Right cardiac atrium (tissue), 5 donors: ENCODE measurements at regions of chr1 and their contacts with region 1.

Region 1: DNA sequence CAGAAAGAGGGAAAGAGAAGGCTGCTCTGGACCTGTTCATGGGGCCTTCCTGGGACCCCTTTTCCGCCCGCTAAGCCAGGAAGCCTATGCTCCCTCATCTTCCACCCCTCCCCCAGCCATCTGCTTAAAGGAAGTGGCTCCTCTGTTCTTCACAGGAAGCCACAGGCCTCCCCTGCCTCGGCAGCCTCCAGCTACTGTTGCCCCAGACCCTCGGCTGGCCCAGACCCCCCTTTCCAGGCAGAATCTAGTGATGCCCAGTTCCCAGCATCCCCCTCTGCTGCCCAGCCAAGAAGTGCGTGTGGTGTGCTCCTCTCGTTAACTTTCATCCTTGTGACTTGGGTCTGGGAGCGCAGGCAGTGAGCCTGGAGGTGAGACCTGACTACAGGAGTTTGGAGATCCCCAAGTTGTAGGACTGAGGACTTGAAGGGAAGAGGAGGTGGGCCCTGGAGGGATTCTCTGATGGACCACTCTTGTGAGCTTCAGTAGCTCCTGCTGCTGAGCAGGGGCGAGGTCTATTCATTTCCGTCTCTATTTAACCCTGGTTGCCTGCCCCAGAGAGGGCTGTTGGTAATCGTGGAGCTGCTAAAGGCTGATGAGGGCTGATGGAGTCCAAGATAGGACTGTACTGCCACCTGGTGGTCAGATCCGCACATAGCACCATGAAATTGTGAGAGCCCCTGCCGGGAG is 9.1 kb downstream of the IFI6 start:
- DNase-seq: peak; percentile 75 to 92 (median 86)
- ATAC-seq: peak; percentile 58 to 72
- H3K4me3 ChIP-seq: no peak overlapping the region
- H3K27ac ChIP-seq: peak overlapping the region; percentile 87
- H3K4me1 ChIP-seq: peaks cover 6% of the 10 kb centered on the region
- H3K27me3 ChIP-seq: no peaks in the 10 kb centered on the region

Region 2: DNA sequence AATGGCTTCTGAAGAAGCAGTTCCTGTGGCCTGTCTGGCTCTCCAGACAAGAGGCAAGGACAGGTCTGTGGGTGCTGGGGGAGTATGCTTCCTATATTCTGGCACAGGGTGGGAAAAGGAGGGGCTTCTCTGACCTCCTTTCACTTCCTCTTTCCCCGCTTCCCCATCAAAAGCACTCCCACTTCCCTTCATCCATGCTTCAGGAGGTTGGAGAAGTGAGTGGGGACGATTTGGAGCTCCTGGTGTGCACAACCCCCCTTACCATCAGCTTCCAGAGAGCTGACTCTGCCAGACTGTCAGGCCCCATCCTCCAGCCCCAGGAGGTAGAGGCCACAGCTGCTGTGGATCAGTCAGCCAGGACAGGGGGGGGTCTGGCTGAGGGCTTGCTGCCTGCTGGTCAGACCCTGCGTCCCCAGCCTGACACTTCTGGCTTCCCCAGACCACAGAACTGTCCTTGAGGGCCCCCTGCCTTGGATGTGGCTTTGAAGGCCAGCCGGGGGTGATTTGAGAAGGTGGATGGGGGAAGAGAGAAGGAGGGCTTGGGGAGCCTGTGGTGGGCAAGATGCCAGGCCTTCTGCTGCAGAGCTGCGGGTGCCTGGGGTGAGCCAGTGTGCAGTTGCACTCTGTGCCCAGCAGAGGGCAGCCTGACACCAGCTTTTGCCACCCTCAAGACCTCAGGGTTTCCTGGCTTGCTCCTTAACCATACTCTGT is 362.4 kb before region 1 on chr1:
- intact Hi-C with region 1: loop called in 2 of 4 experiments (anchors 5 to 10 kb)
- DNase-seq: peak; percentile 82 to 94 (median 93)
- ATAC-seq: peak; percentile 86
- H3K4me3 ChIP-seq: no peak overlapping the region
- H3K27ac ChIP-seq: peak overlapping the region; percentile 78
- H3K4me1 ChIP-seq: peaks cover 13% of the 10 kb centered on the region
- H3K27me3 ChIP-seq: no peaks in the 10 kb centered on the region

Region 3: GRCh38 chr1:27392096-27392777 is 270.6 kb before region 1 on chr1 and contains the start of gene GPR3:
- intact Hi-C with region 1: loop called in 1 of 4 experiments (anchors 10 kb)
- DNase-seq: peak; percentile 95 to 98 (median 97)
- ATAC-seq: peak; percentile 91
- H3K4me3 ChIP-seq: peak within 1 kb of the TSS; percentile 39
- H3K27ac ChIP-seq: peak within 1 kb of the TSS; percentile 77
- H3K4me1 ChIP-seq: peaks cover 9% of the 10 kb centered on the region
- H3K27me3 ChIP-seq: no peaks in the 10 kb centered on the region
- total RNA-seq, gene GPR3: 0.46 to 3.3 (median 0.68) TPM

Region 4: GRCh38 chr1:27455139-27455811 is 207.6 kb before region 1 on chr1:
- intact Hi-C with region 1: no loop called
- DNase-seq: no peak
- ATAC-seq: peak in 1 of 2 donors; percentile 47
- H3K4me3 ChIP-seq: no peak overlapping the region
- H3K27ac ChIP-seq: no peak overlapping the region
- H3K4me1 ChIP-seq: peaks cover 2% of the 10 kb centered on the region
- H3K27me3 ChIP-seq: no peaks in the 10 kb centered on the region

Region 5: DNA sequence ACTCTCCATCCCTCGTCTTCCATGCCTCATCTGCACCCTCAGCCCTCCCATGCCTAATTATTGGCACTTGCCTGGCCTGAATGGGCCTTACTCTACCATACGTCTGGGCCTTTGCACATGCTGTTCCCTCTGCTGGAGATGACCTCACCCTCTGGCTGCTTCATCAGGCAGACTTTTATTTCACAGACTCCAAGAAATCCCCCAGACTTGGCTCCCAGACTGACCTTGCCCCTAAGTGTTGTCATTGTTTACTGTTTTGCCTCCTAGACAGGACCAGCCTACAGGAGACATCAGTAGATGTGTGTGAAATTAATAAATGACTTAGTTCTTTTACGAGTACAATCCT is 53.7 kb before region 1 on chr1:
- intact Hi-C with region 1: loop called (anchors 1 to 2 kb)
- DNase-seq: peak in 1 of 3 donors; percentile 20
- ATAC-seq: peak in 1 of 2 donors; percentile 6
- H3K4me3 ChIP-seq: no peak overlapping the region
- H3K27ac ChIP-seq: no peak overlapping the region
- H3K4me1 ChIP-seq: peaks cover 3% of the 10 kb centered on the region
- H3K27me3 ChIP-seq: no peaks in the 10 kb centered on the region

Region 6: DNA sequence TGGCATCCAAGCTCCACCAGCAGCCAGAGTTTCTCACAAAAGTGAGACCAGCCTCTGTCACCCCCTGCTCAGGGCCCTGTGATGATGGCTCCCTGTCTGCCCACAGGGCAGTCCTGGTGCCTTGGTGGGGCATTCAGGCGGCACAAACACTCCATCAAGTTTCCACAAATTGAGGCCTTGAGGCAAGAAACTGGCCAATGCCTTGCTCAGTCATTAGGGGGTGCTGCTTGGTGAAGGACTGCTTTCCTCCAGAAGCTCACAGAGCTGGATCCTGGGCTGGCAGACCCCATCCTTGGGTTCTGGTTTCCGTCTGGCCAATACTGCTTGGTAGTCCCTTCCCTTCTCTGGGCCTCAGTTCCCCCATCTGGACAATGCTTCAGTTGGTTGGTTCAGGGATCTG is 46.4 kb before region 1 on chr1:
- intact Hi-C with region 1: loop called in 2 of 4 experiments (anchors 2 to 5 kb)
- DNase-seq: no peak
- ATAC-seq: no peak
- H3K4me3 ChIP-seq: no peak overlapping the region
- H3K27ac ChIP-seq: no peak overlapping the region
- H3K4me1 ChIP-seq: peaks cover 2% of the 10 kb centered on the region
- H3K27me3 ChIP-seq: no peaks in the 10 kb centered on the region